ENCODE measurements at regions of chr15 and their contacts with region 1.

Region 1: GRCh38 chr15:59174835-59175831 is 31.5 kb upstream of the LDHAL6B start:
- DNase-seq: peak in 1 of 2 donors; percentile 39
- ATAC-seq: peak; percentile 45 to 74
- H3K4me3 ChIP-seq: no peak overlapping the region
- H3K27ac ChIP-seq: no peak overlapping the region
- H3K4me1 ChIP-seq: peaks cover 4 to 14% of the 10 kb centered on the region in 2 donors
- H3K27me3 ChIP-seq: no peaks in the 10 kb centered on the region
- CTCF ChIP-seq: peak; percentile 21 to 50 (median 47)
- POLR2A ChIP-seq: no peak

Region 2: DNA sequence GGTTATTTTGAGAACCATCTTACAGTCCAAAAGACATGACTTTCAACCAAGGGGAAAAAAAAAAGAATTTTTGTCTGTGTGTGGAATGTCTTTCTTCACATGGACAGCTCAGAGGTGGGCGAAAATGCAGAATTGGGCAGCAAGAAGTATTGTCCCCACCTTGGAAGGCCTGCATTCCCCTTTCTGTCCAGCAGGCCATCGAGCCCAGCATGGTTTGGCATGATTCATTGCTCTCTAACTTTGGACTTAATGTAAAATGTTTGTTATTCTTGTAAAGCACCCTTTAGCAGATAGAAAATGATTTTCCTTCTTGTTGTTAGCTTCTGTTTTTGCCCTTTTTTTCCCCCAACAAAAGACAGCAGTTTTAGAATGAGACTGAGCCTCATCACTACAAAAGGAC is 185.2 kb after region 1 on chr15:
- in situ Hi-C with region 1: no loop called
- intact Hi-C with region 1: no loop called
- DNase-seq: no peak
- ATAC-seq: no peak
- H3K4me3 ChIP-seq: no peak overlapping the region
- H3K27ac ChIP-seq: no peak overlapping the region
- H3K4me1 ChIP-seq: peaks cover 0 to 3% of the 10 kb centered on the region in 2 donors
- H3K27me3 ChIP-seq: no peaks in the 10 kb centered on the region
- CTCF ChIP-seq: no peak
- POLR2A ChIP-seq: no peak

Region 3: GRCh38 chr15:59410391-59410896 is 235.3 kb after region 1 on chr15:
- in situ Hi-C with region 1: no loop called
- intact Hi-C with region 1: loop called (anchors 10 kb)
- DNase-seq: no peak
- ATAC-seq: no peak
- H3K4me3 ChIP-seq: no peak overlapping the region
- H3K27ac ChIP-seq: no peak overlapping the region
- H3K4me1 ChIP-seq: no peaks in the 10 kb centered on the region
- H3K27me3 ChIP-seq: no peaks in the 10 kb centered on the region
- CTCF ChIP-seq: no peak
- POLR2A ChIP-seq: no peak

Measured in gastrocnemius medialis (tissue), 4 donors.